OCI-LY7 (cell line): ENCODE measurements at regions of chr2 and their contacts with region 1.

Region 1: GRCh38 chr2:121133551-121134319 is 151.3 kb downstream of the TFCP2L1 start:
- DNase-seq: no peak
- H3K4me3 ChIP-seq: no peak overlapping the region
- H3K27ac ChIP-seq: no peak overlapping the region
- H3K4me1 ChIP-seq: no peaks in the 10 kb centered on the region
- CTCF ChIP-seq: no peak

Region 2: DNA sequence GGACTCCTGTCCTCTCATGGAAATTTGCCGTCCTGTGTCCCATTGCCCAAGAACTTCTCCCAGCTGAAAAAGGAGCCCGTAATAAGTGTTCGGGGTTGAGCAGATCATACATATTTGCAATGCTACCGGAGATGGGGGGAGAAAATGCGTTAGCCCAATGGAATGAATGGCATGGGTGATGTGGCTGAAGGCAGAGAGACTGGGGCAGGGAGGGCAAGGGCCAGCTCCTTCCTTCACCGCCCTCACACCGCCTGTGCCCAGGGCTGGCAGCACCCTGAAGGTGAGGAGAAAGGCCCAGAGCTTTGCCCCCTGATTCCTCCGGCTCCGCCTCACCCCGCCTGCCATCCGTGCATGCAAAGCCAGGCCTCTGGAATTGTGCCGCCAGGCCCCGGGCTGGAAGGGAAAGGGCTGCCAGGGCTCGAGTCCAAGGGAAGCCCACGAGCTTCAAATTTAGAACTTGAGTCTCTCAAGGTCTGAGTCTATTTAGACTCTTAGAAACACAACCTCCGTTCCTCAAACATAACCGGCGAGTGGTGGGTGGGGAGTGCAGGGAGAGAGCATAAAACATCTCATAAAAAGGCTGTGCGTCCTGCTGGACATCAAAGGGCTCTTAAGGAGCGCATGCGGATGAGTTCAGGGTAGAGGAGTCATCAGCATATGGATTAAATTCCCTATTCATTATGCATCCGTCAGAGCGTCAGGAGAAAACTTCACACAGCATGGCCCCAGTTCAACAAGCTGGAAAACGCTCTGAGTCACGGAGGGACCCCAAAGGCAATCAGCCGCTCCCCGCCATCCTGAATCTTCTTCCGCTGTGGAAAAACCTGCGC is 519.8 kb before region 1 on chr2:
- CTCF ChIA-PET with region 1: no interaction called
- POLR2A ChIA-PET with region 1: no interaction called
- intact Hi-C with region 1: no loop called
- DNase-seq: no peak
- H3K4me3 ChIP-seq: no peak overlapping the region
- H3K27ac ChIP-seq: no peak overlapping the region
- H3K4me1 ChIP-seq: no peaks in the 10 kb centered on the region
- CTCF ChIP-seq: no peak

Region 3: DNA sequence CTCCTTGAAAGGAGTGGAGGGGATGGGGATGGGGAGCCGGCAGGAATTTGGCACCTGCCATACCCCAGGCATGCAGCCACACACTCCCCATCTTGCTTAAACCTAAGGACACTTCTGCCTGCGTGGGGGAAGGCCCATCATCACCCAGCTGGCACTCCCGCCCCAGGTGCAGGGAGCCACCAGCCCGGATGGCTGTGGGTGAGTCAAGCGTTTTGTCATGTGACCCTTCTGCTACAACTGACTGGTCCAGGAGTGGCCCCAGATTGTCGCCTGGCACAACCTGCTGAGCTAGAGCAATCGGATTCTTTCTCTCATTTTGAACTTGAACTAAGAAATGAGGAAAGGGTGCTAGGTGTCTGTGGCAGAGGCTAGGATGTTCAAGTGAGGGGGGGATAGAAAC is 683.1 kb after region 1 on chr2:
- CTCF ChIA-PET with region 1: no interaction called
- POLR2A ChIA-PET with region 1: interaction called, 11 read pairs
- intact Hi-C with region 1: no loop called
- DNase-seq: peak; percentile 46
- H3K4me3 ChIP-seq: no peak overlapping the region
- H3K27ac ChIP-seq: no peak overlapping the region
- H3K4me1 ChIP-seq: peaks cover 66% of the 10 kb centered on the region
- CTCF ChIP-seq: no peak